K562 (cell line): ENCODE measurements at regions of chr15 and their contacts with region 1.

Region 1: DNA sequence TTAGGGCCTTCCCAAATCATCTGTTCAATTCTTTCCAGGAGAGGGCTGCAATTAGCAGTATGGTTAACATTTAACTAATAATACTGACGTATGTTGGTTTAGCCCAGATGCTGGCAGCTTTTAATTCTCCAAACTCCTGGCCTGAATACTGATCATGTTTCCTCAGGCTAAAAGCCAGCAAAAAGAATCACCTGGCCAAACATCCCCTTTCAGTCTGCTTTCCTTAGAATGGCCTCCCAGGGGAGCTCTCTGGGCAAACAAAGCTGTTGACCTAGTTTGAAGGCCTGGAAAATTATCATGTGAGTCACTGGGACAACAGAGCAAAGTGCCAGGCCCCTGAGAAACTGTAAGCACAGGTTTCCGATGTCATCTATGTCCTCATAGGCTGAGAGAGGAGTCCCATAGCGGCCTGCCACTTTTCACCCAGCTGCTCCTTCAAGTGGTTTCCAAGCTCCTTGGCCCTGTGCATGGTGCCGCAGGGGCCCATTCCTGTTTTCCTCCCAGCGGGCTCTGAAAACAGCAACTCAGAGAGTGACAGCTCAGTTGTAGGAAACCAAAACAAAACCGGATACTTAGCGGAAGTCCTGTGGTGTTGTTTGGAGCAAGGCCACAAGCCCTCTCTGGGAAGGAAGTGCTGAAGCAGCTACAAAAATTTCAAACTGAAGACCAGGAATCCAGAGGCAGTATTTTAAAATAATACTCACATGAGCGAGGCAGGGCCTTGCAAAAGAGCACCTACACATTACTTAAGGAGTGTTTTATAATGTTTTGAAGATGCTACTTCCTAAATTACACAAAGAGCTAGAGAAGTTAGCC is 36.5 kb upstream of the RAB11A start:
- DNase-seq: peak; percentile 65 to 83 (median 70)
- ATAC-seq: peak; percentile 76
- H3K4me3 ChIP-seq: no peak overlapping the region; the same call in 1 of the 2 replicates
- H3K27ac ChIP-seq: peak overlapping the region; percentile 86
- H3K4me1 ChIP-seq: peaks cover 19 to 52% of the 10 kb centered on the region in 2 experiments
- H3K27me3 ChIP-seq: no peaks in the 10 kb centered on the region
- CTCF ChIP-seq: peak; percentile 37 to 63 (median 52); a peak in 4 of 6 replicates
- EP300 ChIP-seq: no peak; the same call in 1 of the 2 replicates
- POLR2A ChIP-seq: peak; percentile 61
- RAD21 ChIP-seq: peak; percentile 52 to 72

Region 2: DNA sequence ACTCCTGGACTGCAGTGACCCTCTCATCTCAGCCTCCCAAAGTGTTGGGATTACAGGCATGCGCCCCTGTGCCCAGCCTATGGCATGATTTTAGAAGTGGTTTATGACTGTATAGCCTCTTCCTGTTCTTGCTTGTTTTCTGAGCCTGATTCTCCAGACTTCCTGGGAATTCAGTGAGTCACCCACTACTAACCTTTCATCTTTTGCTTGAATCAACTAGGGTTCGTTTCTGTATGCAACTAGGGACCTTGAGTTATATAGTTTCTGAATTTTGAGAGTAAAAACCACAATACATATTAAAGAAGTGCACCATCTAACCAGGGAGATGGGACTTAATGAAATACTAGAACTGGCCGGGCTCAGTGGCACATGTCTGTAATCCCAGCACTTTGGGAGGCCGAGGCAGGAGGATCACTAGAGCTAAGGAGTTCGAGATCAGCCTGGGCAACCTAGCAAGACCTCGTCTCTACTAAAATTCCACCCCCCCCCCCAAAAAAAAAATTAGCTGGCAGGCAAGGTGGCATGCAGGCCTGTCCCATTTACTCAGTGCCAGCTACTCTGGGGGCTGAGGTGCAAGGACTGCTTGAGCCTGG is 1296.4 kb before region 1 on chr15:
- CTCF ChIA-PET with region 1: no interaction called
- POLR2A ChIA-PET with region 1: no interaction called
- in situ Hi-C with region 1: no loop called
- intact Hi-C with region 1: no loop called
- DNase-seq: no peak
- ATAC-seq: no peak
- H3K4me3 ChIP-seq: no peak overlapping the region
- H3K27ac ChIP-seq: no peak overlapping the region
- H3K4me1 ChIP-seq: peaks cover 0 to 15% of the 10 kb centered on the region in 2 experiments; a peak in 4 of 5 replicates
- H3K27me3 ChIP-seq: no peaks in the 10 kb centered on the region
- CTCF ChIP-seq: no peak
- EP300 ChIP-seq: no peak
- POLR2A ChIP-seq: no peak
- RAD21 ChIP-seq: no peak

Region 3: DNA sequence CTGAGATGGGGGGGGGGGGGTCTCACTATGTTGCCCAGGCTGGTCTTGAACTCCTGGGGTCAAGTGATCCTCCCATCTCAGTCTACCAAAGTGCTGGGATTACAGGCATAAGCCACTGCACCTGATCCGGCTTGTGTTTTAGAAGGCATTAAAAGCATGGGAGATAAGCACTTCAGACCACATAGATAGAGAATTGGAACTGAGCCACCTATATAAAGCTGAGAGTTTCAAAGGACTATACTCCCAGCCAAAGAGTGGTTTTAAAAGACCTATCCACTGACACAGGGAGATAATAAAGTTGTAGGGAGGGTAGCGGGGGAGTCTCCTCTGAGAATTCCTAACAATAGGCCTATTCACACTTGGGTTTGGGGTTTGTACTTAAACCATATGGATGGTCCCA is 75.5 kb before region 1 on chr15:
- CTCF ChIA-PET with region 1: no interaction called
- POLR2A ChIA-PET with region 1: no interaction called
- in situ Hi-C with region 1: no loop called
- intact Hi-C with region 1: no loop called
- DNase-seq: peak in 2 of 4 experiments; percentile 26 to 65
- ATAC-seq: peak; percentile 77
- H3K4me3 ChIP-seq: no peak overlapping the region
- H3K27ac ChIP-seq: no peak overlapping the region
- H3K4me1 ChIP-seq: peaks cover 0 to 4% of the 10 kb centered on the region in 2 experiments; a peak in 1 of 5 replicates
- H3K27me3 ChIP-seq: no peaks in the 10 kb centered on the region
- CTCF ChIP-seq: no peak
- EP300 ChIP-seq: peak; percentile 34; the same call in 1 of the 2 replicates
- POLR2A ChIP-seq: no peak
- RAD21 ChIP-seq: no peak

Region 4: GRCh38 chr15:65773386-65774111 is 59.2 kb before region 1 on chr15:
- CTCF ChIA-PET with region 1: no interaction called
- POLR2A ChIA-PET with region 1: no interaction called
- in situ Hi-C with region 1: no loop called
- intact Hi-C with region 1: loop called (anchors 2 kb)
- DNase-seq: no peak
- ATAC-seq: no peak
- H3K4me3 ChIP-seq: no peak overlapping the region
- H3K27ac ChIP-seq: no peak overlapping the region
- H3K4me1 ChIP-seq: peaks cover 10 to 12% of the 10 kb centered on the region in 2 experiments; a peak in 4 of 5 replicates
- H3K27me3 ChIP-seq: no peaks in the 10 kb centered on the region
- CTCF ChIP-seq: no peak
- EP300 ChIP-seq: no peak
- POLR2A ChIP-seq: no peak
- RAD21 ChIP-seq: no peak

Region 5: DNA sequence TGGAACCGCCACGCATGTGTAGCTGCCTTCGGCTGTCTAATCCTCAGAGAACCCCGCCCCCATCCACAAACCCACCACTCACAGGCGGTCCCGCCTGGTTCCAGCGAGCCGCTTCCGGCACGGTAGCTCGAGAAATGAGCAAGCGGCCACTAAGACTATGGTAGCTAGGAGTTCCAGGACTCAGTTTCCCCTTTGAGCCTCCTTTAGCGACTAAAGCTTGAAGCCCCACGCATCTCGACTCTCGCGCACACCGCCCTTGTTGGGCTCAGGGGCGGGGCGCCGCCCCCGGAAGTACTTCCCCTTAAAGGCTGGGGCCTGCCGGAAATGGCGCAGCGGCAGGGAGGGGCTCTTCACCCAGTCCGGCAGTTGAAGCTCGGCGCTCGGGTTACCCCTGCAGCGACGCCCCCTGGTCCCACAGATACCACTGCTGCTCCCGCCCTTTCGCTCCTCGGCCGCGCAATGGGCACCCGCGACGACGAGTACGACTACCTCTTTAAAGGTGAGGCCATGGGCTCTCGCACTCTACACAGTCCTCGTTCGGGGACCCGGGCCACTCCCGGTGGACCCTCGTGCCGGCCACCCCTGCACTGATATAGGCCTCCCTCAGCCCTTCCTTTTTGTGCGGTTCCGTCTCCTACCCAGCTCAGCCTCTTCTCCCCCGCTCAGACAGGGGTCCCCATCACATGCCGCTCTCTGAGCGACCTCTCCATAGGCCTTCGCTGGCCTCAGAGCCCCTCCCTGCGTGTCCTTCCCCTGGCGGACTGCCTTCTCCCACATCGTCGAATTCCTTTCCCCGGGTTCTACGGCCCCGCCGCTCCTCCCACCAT is 36.6 kb after region 1 on chr15 and contains the start of gene RAB11A:
- CTCF ChIA-PET with region 1: no interaction called
- POLR2A ChIA-PET with region 1: interaction called, 6 read pairs
- in situ Hi-C with region 1: no loop called
- intact Hi-C with region 1: loop called (anchors 5 kb)
- DNase-seq: peak; percentile 94 to 98 (median 96)
- ATAC-seq: peak; percentile 94
- H3K4me3 ChIP-seq: peak within 1 kb of the TSS; percentile 87
- H3K27ac ChIP-seq: peak within 1 kb of the TSS; percentile 96
- H3K4me1 ChIP-seq: peaks cover 11 to 12% of the 10 kb centered on the region in 2 experiments; a peak in 3 of 5 replicates
- H3K27me3 ChIP-seq: no peaks in the 10 kb centered on the region
- CTCF ChIP-seq: peak; percentile 49 to 58 (median 53); a peak in 4 of 6 replicates
- EP300 ChIP-seq: 0 out of 2 replicates have a peak, but pooled peaks have one; percentile 18
- POLR2A ChIP-seq: peak; percentile 99
- RAD21 ChIP-seq: peak in 1 of 2 experiments; percentile 39; a peak in 2 of 4 replicates
- polyA plus RNA-seq, gene RAB11A: 236 to 271 TPM